B cell (primary cell): ENCODE measurements at regions of chr3 and their contacts with region 1.

Region 1: DNA sequence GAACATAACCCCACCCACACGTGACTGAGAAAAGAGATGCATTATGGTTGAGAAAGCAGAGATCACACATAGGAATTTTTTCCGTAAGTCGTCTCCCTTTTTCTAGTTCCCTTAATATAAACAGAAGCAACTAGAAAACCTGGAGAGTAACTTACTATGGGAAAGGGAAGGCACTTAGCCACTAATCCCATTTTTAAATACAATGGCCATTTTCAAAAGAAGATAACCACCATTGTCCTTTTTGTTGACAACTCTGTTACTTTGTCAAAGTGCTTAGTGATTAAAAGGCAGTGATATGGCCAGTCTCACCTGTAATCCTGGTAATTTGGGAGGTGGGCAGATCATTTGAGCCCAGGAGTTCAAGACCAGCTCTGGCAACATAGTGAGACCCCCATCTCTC is 184.4 kb upstream of the UMPS start:
- DNase-seq: no peak
- ATAC-seq: no peak
- H3K4me3 ChIP-seq: no peak overlapping the region
- H3K4me3 Mint-ChIP-seq: no peak overlapping the region
- H3K27ac ChIP-seq: no peak overlapping the region
- H3K27ac Mint-ChIP-seq: no peak overlapping the region
- H3K4me1 ChIP-seq: no peaks in the 10 kb centered on the region
- H3K4me1 Mint-ChIP-seq: no peaks in the 10 kb centered on the region
- H3K27me3 ChIP-seq: no peaks in the 10 kb centered on the region
- H3K27me3 Mint-ChIP-seq: peaks cover 10% of the 10 kb centered on the region
- CTCF ChIP-seq: no peak

Region 2: DNA sequence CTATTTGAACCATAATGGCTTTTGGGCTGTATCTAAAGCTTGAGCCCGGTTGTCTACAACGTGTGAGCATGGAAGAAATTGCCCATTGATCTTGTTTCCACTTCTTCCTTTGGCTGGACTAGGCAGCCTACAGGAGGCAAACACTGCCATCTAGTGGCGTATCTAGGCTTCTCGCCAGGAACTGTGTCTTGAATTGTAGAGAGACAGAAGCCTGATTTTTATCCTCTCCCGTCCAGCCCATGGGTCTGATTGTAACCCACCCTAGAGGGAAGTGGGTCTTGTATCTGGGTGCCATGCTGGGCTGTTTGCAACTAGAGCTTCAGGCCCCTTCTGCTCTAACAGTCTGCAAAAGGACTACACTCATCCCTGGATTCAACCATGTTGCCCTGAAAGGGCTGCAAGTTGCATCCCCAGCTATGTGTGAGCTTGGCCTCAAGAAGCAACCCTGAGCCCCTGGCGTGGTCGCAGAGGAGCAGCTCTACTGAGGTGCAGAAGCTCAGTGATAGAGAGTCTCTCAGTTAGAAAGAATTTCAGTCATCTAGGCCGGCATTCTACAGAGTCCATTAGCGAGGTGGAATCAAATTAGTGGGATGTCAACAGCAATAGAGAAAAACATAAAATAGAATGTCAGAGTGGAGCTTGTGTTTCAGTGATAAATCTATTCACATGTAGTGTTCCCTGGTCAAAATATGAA is 14.1 kb after region 1 on chr3:
- CTCF ChIA-PET with region 1: interaction called, 25 read pairs
- POLR2A ChIA-PET with region 1: no interaction called
- intact Hi-C with region 1: no loop called
- DNase-seq: peak; percentile 60
- ATAC-seq: peak; percentile 63
- H3K4me3 ChIP-seq: no peak overlapping the region
- H3K4me3 Mint-ChIP-seq: no peak overlapping the region
- H3K27ac ChIP-seq: no peak overlapping the region
- H3K27ac Mint-ChIP-seq: no peak overlapping the region
- H3K4me1 ChIP-seq: no peaks in the 10 kb centered on the region
- H3K4me1 Mint-ChIP-seq: no peaks in the 10 kb centered on the region
- H3K27me3 ChIP-seq: peaks cover 0 to 5% (median under 1%) of the 10 kb centered on the region in 4 experiments
- H3K27me3 Mint-ChIP-seq: peaks cover 44% of the 10 kb centered on the region
- CTCF ChIP-seq: peak; percentile 92

Region 3: DNA sequence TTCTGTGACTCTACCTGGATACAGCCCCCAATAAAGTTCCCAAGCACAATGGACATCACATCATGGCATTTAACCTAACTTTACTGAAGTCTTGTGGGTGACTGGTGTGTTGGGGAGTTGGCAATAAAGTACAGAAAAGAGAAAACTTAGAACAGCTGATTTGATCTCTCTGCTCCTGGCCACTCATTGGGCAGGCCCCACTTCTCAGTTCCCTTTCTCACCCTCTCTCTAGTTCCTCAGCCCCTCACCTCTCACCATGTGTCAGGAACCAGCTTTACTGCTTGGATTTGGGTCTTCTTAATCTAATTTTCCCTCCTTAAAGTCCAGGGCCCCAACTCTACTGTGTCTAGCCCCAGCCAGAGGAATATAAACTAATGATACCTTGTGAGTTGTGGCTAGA is 389.4 kb after region 1 on chr3:
- CTCF ChIA-PET with region 1: no interaction called
- POLR2A ChIA-PET with region 1: no interaction called
- intact Hi-C with region 1: no loop called
- DNase-seq: no peak
- ATAC-seq: no peak
- H3K4me3 ChIP-seq: no peak overlapping the region
- H3K4me3 Mint-ChIP-seq: no peak overlapping the region
- H3K27ac ChIP-seq: no peak overlapping the region
- H3K27ac Mint-ChIP-seq: no peak overlapping the region
- H3K4me1 ChIP-seq: no peaks in the 10 kb centered on the region
- H3K4me1 Mint-ChIP-seq: no peaks in the 10 kb centered on the region
- H3K27me3 ChIP-seq: no peaks in the 10 kb centered on the region
- H3K27me3 Mint-ChIP-seq: peaks cover 18% of the 10 kb centered on the region
- CTCF ChIP-seq: no peak